CD14-positive monocyte (primary cell): ENCODE measurements at regions of chr5 and their contacts with region 1.

Region 1: DNA sequence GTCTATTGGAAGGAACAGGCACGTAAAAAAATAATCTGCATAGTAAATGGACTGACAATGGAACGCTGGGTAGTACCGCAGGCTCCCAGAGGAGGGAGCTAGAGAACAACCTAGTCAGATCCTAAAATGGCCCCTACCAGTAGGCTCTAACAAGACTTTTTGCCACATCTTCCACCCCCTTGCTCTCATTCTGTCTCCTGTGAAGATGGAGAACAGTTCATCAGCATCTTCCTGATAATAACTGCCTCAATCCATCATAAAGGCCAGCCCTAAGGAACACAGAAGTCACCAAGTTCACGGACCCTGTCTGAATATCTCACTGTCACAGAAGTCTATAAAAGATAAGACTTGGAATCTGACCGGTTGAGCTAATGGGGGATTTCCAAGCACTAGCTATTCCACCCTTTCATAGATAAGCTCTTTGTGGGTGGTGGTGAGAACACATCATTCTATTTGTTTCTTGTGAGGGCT is 133.4 kb downstream of the SLC1A3 start:
- DNase-seq: peak; percentile 66 to 83 (median 80)
- H3K4me3 ChIP-seq: no peak overlapping the region
- H3K4me3 Mint-ChIP-seq: no peak overlapping the region
- H3K27ac ChIP-seq: no peak overlapping the region
- H3K27ac Mint-ChIP-seq: no peak overlapping the region
- H3K4me1 ChIP-seq: peaks cover 8 to 9% of the 10 kb centered on the region in 2 donors
- H3K4me1 Mint-ChIP-seq: peaks cover 13% of the 10 kb centered on the region
- H3K27me3 ChIP-seq: peaks cover 4% of the 10 kb centered on the region in 2 donors
- H3K27me3 Mint-ChIP-seq: peaks cover 7 to 19% (median 10%) of the 10 kb centered on the region in 3 donors
- CTCF ChIP-seq: peak; percentile 89

Region 2: DNA sequence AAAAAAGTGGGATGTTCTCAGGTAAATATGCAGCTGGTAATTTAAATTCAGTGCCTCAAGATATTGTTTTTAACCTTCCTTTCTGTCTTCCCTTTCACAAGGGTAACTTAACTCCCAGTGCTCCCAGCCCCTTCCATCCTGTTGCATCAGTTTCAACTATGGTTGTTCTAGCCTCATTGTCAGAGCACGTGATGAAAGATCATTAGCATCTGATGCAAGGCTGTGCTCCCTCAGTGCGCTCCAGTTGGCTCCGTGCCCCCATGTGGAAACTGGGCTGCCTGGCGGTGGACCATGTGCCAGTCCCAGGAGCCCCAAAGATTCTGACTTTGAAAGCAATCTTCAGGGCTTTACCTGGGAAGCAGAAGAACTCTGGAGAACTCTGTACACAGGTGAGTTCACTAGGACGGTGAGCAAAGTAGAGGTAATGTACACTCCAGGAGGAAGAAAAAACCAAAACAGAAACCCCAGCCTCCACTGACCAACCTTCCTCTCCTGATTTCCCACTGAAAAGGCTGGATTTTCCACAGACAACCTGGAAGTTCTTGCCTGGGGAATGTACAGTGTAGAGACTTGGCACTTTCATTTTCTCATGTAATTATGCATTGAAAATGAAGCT is 36.4 kb before region 1 on chr5:
- intact Hi-C with region 1: no loop called
- DNase-seq: peak in 2 of 3 donors; percentile 21 to 47
- H3K4me3 ChIP-seq: no peak overlapping the region
- H3K4me3 Mint-ChIP-seq: peak overlapping the region; percentile 23 to 38
- H3K27ac ChIP-seq: no peak overlapping the region
- H3K27ac Mint-ChIP-seq: peak overlapping the region in 3 of 7 donors; percentile 25 to 63 (median 27)
- H3K4me1 ChIP-seq: peaks cover 18% of the 10 kb centered on the region in 2 donors
- H3K4me1 Mint-ChIP-seq: peaks cover 29% of the 10 kb centered on the region
- H3K27me3 ChIP-seq: no peaks in the 10 kb centered on the region
- H3K27me3 Mint-ChIP-seq: no peaks in the 10 kb centered on the region
- CTCF ChIP-seq: no peak

Region 3: GRCh38 chr5:36836831-36837230 is 97.0 kb after region 1 on chr5:
- intact Hi-C with region 1: no loop called
- DNase-seq: peak; percentile 12 to 50 (median 48)
- H3K4me3 ChIP-seq: peak overlapping the region in 1 of 3 experiments; percentile 15
- H3K4me3 Mint-ChIP-seq: no peak overlapping the region
- H3K27ac ChIP-seq: peak overlapping the region in 1 of 2 donors; percentile 26
- H3K27ac Mint-ChIP-seq: peak overlapping the region in 4 of 7 donors; percentile 12 to 82 (median 63)
- H3K4me1 ChIP-seq: peaks cover 53 to 59% of the 10 kb centered on the region in 2 donors
- H3K4me1 Mint-ChIP-seq: peaks cover 53% of the 10 kb centered on the region
- H3K27me3 ChIP-seq: no peaks in the 10 kb centered on the region
- H3K27me3 Mint-ChIP-seq: peaks cover 0 to 4% (median 2%) of the 10 kb centered on the region in 3 donors
- CTCF ChIP-seq: no peak

Region 4: GRCh38 chr5:36870399-36871040 is 130.7 kb after region 1 on chr5:
- intact Hi-C with region 1: loop called (anchors 5 kb)
- DNase-seq: peak; percentile 66 to 88 (median 76)
- H3K4me3 ChIP-seq: no peak overlapping the region
- H3K4me3 Mint-ChIP-seq: no peak overlapping the region
- H3K27ac ChIP-seq: no peak overlapping the region
- H3K27ac Mint-ChIP-seq: no peak overlapping the region
- H3K4me1 ChIP-seq: peaks cover 14 to 31% of the 10 kb centered on the region in 2 donors
- H3K4me1 Mint-ChIP-seq: peaks cover 29% of the 10 kb centered on the region
- H3K27me3 ChIP-seq: no peaks in the 10 kb centered on the region
- H3K27me3 Mint-ChIP-seq: peaks cover 0 to 2% (median 1%) of the 10 kb centered on the region in 3 donors
- CTCF ChIP-seq: peak; percentile 81

Region 5: DNA sequence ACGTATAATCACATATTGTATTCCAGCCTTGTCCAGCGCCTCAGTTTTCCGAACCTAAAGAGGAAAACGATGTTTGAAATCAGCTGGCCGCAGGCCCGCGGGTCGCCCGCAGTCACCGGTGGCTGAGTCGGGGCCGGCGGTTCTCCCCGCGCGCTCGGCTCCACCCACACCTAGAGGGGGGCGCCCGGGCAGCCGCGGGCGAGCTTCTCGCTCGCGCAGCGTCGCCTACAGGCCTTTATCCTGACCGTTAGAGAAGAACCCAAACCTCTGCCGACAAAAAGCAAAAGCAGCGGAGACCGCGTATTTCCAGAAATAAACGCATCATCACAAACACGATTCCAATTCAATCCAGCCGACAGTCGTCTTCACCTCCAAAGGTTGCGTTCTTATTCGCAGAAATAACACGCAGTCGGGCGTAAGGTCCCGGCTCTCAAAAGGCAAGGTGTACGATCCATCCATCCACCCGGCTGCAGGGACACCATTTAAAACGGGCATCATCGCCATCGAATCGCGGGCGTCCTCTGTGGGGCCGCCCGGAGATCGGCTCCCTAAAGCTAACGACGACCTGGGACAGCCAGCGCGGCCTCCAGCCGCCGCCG is 136.1 kb after region 1 on chr5:
- intact Hi-C with region 1: loop called (anchors 5 kb)
- DNase-seq: peak; percentile 71 to 76 (median 72)
- H3K4me3 ChIP-seq: peak overlapping the region; percentile 87 to 98 (median 97)
- H3K4me3 Mint-ChIP-seq: peak overlapping the region; percentile 98 to 99
- H3K27ac ChIP-seq: peak overlapping the region; percentile 94 to 100
- H3K27ac Mint-ChIP-seq: peak overlapping the region; percentile 96 to 98 (median 98)
- H3K4me1 ChIP-seq: peaks cover 24 to 55% of the 10 kb centered on the region in 2 donors
- H3K4me1 Mint-ChIP-seq: peaks cover 47% of the 10 kb centered on the region
- H3K27me3 ChIP-seq: no peaks in the 10 kb centered on the region
- H3K27me3 Mint-ChIP-seq: no peaks in the 10 kb centered on the region
- CTCF ChIP-seq: peak; percentile 58

Region 6: DNA sequence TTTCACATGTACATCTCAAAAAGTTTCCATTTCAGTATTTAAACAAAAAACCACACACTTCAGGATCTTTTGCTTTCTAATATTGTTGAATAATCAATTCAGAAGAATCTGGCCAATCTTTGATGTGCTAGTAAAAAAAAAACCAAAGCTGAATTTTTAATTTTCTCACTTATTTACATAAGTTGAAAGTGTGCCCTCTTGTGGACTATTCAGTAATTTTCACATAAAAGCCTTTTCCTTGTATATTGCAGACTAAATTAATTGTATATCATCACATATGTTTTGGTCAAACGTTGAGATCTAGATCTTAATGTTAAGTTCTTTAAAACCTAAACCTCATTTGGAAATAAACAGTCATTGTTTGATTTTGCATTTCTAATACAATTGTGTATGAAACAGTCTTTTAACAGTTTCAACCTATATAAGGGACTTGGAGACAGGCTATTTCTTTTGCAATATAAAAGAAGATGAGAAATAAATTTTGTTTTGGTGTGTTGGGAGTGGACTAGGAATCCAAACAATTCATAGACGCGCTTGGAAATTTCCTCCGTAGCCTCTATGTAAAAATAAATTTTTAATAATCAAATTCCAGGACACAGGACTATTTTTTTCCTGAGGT is 204.9 kb after region 1 on chr5:
- intact Hi-C with region 1: loop called in 1 of 2 experiments (anchors 10 kb)
- DNase-seq: peak; percentile 32 to 59 (median 44)
- H3K4me3 ChIP-seq: no peak overlapping the region
- H3K4me3 Mint-ChIP-seq: no peak overlapping the region
- H3K27ac ChIP-seq: no peak overlapping the region
- H3K27ac Mint-ChIP-seq: no peak overlapping the region
- H3K4me1 ChIP-seq: peaks cover 2 to 5% of the 10 kb centered on the region in 2 donors
- H3K4me1 Mint-ChIP-seq: peaks cover 10% of the 10 kb centered on the region
- H3K27me3 ChIP-seq: no peaks in the 10 kb centered on the region
- H3K27me3 Mint-ChIP-seq: no peaks in the 10 kb centered on the region
- CTCF ChIP-seq: peak; percentile 76